Panc1 (cell line): ENCODE measurements at regions of chr13 and their contacts with region 1.

Region 1: GRCh38 chr13:113425931-113426590 is 27.2 kb downstream of the ADPRHL1 start:
- DNase-seq: no peak
- ATAC-seq: no peak
- H3K4me3 ChIP-seq: no peak overlapping the region
- H3K27ac ChIP-seq: no peak overlapping the region
- H3K4me1 ChIP-seq: no peaks in the 10 kb centered on the region
- H3K27me3 ChIP-seq: no peaks in the 10 kb centered on the region
- CTCF ChIP-seq: no peak

Region 2: GRCh38 chr13:113050726-113051431 is 375.2 kb before region 1 on chr13:
- CTCF ChIA-PET with region 1: no interaction called
- POLR2A ChIA-PET with region 1: no interaction called
- in situ Hi-C with region 1: no loop called
- intact Hi-C with region 1: loop called (anchors 5 kb)
- DNase-seq: no peak
- ATAC-seq: no peak
- H3K4me3 ChIP-seq: no peak overlapping the region
- H3K27ac ChIP-seq: no peak overlapping the region
- H3K4me1 ChIP-seq: no peaks in the 10 kb centered on the region
- H3K27me3 ChIP-seq: no peaks in the 10 kb centered on the region
- CTCF ChIP-seq: no peak